Motor neuron (in vitro differentiated cells): ENCODE measurements at regions of chr18 and their contacts with region 1.

Region 1: GRCh38 chr18:41906528-41907146 is 48.4 kb upstream of the PIK3C3 start:
- ATAC-seq: peak in 5 of 8 experiments; percentile 29 to 50 (median 41)
- H3K4me3 ChIP-seq: no peak overlapping the region
- H3K27ac ChIP-seq: no peak overlapping the region
- H3K4me1 ChIP-seq: no peaks in the 10 kb centered on the region

Region 2: GRCh38 chr18:41761333-41762028 is 145.2 kb before region 1 on chr18:
- in situ Hi-C with region 1: loop called in 1 of 9 experiments (anchors 5 kb)
- ATAC-seq: peak in 6 of 8 experiments; percentile 63 to 97 (median 76)
- H3K4me3 ChIP-seq: no peak overlapping the region
- H3K27ac ChIP-seq: no peak overlapping the region
- H3K4me1 ChIP-seq: peaks cover 7 to 10% of the 10 kb centered on the region in 2 donors

Region 3: GRCh38 chr18:41954827-41955613 is 48.4 kb after region 1 on chr18 and contains the start of gene PIK3C3:
- in situ Hi-C with region 1: no loop called
- ATAC-seq: peak; percentile 85 to 99 (median 97)
- H3K4me3 ChIP-seq: peak within 1 kb of the TSS; percentile 53 to 71 (median 57)
- H3K27ac ChIP-seq: peak within 1 kb of the TSS; percentile 12 to 69
- H3K4me1 ChIP-seq: peaks cover 8 to 19% of the 10 kb centered on the region in 2 donors
- total RNA-seq, gene PIK3C3: 28.0 to 125 (median 37.5) TPM

Region 4: DNA sequence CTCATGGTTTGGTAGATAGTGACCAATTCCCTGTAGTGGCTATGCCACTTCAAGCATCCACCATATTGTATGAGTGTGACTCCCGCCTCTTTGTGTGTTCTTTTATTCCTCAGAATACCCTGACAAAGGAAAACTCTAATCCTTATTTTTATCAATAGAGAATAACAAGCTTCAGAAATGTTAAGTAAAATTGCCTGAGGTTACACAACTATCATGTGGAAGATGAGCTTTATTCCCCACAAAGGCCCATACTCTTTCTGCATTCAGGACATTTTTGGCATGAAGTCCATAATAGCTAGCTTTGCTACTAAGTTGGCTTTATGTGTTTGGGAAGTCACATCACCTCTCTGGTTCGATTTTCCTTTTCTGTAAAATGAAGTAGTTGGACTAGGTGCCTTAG is 325.2 kb after region 1 on chr18:
- in situ Hi-C with region 1: no loop called
- ATAC-seq: peak in 1 of 8 experiments; percentile 41
- H3K4me3 ChIP-seq: no peak overlapping the region
- H3K27ac ChIP-seq: no peak overlapping the region
- H3K4me1 ChIP-seq: peaks cover 5 to 10% of the 10 kb centered on the region in 2 donors